Calu3 (cell line): ENCODE measurements at regions of chr13 and their contacts with region 1.

Region 1: GRCh38 chr13:77779552-77780272 is 82.2 kb downstream of the SLAIN1 start:
- DNase-seq: peak; percentile 17
- H3K4me3 Mint-ChIP-seq: peak overlapping the region; percentile 28
- H3K27ac Mint-ChIP-seq: peak overlapping the region; percentile 68
- H3K4me1 Mint-ChIP-seq: no peaks in the 10 kb centered on the region
- H3K27me3 Mint-ChIP-seq: no peaks in the 10 kb centered on the region
- CTCF ChIP-seq: no peak

Region 2: GRCh38 chr13:77099415-77099814 is 680.3 kb before region 1 on chr13:
- CTCF ChIA-PET with region 1: no interaction called
- intact Hi-C with region 1: no loop called
- DNase-seq: no peak
- H3K4me3 Mint-ChIP-seq: no peak overlapping the region
- H3K27ac Mint-ChIP-seq: no peak overlapping the region
- H3K4me1 Mint-ChIP-seq: no peaks in the 10 kb centered on the region
- H3K27me3 Mint-ChIP-seq: no peaks in the 10 kb centered on the region
- CTCF ChIP-seq: no peak

Region 3: DNA sequence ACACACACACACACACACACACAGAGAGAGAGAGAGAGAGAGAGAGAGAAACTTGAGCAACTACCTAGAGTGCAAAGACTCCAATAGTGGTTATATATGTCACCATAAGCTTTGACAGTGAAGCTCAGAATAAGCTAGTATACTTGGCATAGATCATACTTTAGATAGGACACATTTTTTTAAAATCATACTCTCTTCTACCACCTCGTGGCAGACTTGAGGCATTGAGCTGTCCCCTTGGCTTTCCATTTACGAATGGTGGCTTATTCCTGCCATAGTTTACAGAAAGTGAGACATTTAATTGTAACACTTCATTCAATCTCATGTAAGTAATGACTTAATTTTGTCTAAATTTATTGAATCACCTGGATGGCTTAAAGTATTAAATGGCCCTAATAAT is 30.7 kb after region 1 on chr13:
- CTCF ChIA-PET with region 1: no interaction called
- intact Hi-C with region 1: loop called (anchors 5 kb)
- DNase-seq: no peak
- H3K4me3 Mint-ChIP-seq: no peak overlapping the region
- H3K27ac Mint-ChIP-seq: no peak overlapping the region
- H3K4me1 Mint-ChIP-seq: no peaks in the 10 kb centered on the region
- H3K27me3 Mint-ChIP-seq: peaks cover 3% of the 10 kb centered on the region
- CTCF ChIP-seq: no peak

Region 4: GRCh38 chr13:77836423-77836822 is 56.7 kb after region 1 on chr13:
- CTCF ChIA-PET with region 1: no interaction called
- intact Hi-C with region 1: no loop called
- DNase-seq: no peak
- H3K4me3 Mint-ChIP-seq: no peak overlapping the region
- H3K27ac Mint-ChIP-seq: no peak overlapping the region
- H3K4me1 Mint-ChIP-seq: no peaks in the 10 kb centered on the region
- H3K27me3 Mint-ChIP-seq: no peaks in the 10 kb centered on the region
- CTCF ChIP-seq: no peak

Region 5: GRCh38 chr13:77898097-77898496 is 118.4 kb after region 1 on chr13:
- CTCF ChIA-PET with region 1: no interaction called
- intact Hi-C with region 1: no loop called
- DNase-seq: no peak
- H3K4me3 Mint-ChIP-seq: no peak overlapping the region
- H3K27ac Mint-ChIP-seq: no peak overlapping the region
- H3K4me1 Mint-ChIP-seq: no peaks in the 10 kb centered on the region
- H3K27me3 Mint-ChIP-seq: no peaks in the 10 kb centered on the region
- CTCF ChIP-seq: no peak

Region 6: DNA sequence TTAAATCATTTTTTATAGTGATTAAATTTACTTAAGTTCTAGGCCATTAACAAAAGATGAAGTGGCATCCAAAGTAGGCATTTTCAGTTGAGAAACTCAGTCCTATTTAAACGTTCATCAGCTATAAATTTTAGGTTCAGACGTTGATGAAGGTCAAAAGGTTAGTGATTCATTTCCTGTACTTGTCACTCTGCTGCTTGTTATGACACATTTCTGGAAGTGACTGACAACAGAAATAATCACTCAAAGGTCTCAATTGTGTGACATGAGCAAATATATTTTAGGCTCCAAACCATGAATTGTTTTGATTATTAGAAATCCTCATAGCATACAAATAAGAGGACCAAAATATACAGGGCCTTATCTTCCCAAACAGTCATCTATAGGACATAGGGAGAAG is 149.2 kb after region 1 on chr13:
- CTCF ChIA-PET with region 1: no interaction called
- intact Hi-C with region 1: no loop called
- DNase-seq: no peak
- H3K4me3 Mint-ChIP-seq: no peak overlapping the region
- H3K27ac Mint-ChIP-seq: no peak overlapping the region
- H3K4me1 Mint-ChIP-seq: no peaks in the 10 kb centered on the region
- H3K27me3 Mint-ChIP-seq: no peaks in the 10 kb centered on the region
- CTCF ChIP-seq: no peak

Region 7: DNA sequence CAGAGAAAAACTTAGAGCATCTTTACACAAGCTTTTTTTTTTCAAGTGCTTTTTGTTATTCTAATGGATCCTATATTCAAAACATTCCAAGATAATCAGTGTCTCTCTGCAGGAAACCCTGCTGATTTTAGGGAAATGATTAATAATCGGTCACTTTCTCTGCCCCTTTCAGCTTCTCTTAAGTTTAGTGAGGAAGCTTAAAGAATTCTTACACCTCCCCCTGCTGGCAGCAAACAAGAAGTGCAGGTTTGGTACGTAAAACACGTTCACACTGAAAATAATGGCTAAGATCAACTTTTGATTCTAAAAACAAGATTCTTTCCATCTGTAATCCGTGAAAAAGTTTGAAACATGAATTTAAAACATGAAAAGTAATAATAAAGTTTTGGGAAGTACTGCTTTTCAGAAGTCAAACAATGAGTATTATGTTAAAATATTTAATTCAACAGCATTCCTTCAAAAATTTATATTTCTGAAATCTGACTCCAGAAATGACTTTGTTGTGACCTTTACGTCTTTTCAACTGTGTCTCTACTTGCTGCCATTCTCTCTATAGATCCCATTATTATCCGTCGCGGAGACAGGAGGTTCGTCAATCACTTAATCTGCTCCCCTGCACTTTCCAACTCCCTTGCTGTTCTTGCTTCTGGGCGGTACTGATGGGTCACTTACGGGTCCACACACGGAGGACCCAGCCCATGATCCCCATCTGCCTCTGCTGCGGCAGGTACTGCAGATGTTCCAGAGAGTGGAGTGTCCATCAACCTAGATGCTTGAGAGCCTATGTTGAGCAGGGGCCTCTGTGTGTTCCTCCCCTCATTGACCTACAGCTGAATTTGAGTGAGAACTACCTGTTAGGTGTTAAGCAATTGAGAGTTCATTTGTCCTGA is 342.0 kb after region 1 on chr13:
- CTCF ChIA-PET with region 1: no interaction called
- intact Hi-C with region 1: loop called (anchors 1 kb)
- DNase-seq: peak; percentile 3
- H3K4me3 Mint-ChIP-seq: no peak overlapping the region
- H3K27ac Mint-ChIP-seq: no peak overlapping the region
- H3K4me1 Mint-ChIP-seq: no peaks in the 10 kb centered on the region
- H3K27me3 Mint-ChIP-seq: peaks cover 24% of the 10 kb centered on the region
- CTCF ChIP-seq: no peak